Head of caudate nucleus (tissue), 42 donors: ENCODE measurements at regions of chr4 and their contacts with region 1.

Region 1: DNA sequence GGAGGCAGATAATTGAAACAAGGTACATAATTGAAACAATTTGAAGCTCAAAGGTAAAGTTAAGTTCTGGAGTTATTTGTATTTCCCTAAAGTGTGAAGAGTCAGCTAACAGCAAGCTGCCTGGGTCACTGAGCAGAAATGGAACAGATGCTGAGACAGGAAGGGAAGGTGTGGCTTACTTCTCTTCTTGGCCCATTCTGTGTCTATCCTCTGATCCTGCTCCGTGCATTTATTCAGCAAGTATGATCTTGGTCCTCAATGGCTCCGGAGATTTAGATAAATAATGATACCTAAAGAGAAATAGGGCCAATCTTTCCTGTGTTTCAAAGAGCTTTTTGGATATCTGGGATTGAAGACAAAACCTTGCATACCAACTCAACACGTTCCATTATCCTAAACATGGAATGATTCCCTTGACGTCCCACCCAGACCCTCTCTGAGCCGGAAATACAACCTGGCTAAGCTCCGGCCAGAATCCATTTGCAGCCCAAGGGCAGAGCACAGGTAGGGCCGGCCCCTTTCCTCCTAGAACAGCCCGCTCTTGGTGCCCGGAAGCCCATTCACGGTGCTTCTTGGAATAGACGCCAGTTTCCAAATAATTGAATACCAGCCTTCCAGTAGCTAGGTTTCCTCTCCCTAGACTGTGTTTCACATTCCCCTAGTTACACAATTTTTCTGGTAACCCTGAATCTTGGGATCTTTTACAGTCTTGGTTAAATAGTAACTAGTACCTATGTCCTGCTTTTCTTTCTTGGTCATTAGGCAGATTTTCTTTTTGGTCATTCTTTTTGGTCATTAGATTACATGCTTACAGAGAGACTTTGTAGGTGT is 211.0 kb downstream of the NWD2 start:
- DNase-seq: no peak

Region 2: DNA sequence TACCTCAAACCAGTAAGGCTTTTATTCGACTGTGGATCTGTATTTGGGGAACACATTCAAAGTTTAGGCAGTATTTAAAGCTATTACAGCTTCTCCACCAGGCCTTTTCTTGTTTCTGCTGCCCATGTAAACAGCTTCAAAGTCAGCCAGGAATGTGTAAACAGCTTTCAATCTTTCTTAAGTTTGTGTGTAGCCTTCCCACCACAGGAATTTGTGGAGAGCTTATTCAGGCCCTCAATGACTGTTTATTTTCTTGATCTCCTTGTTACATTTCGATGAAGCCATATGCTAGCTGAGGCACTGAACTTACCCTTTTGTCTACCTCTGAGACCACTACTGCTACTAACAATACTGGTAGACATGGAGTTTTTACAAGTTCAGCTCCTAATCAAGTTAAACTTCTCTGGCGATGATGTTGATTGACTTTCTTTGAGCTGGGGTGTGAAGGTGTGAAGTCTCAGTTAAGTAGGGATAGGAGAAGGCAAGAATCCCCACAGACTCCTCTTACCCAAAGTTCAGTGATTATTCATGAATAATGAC is 138.3 kb before region 1 on chr4:
- intact Hi-C with region 1: no loop called
- DNase-seq: no peak

Region 3: DNA sequence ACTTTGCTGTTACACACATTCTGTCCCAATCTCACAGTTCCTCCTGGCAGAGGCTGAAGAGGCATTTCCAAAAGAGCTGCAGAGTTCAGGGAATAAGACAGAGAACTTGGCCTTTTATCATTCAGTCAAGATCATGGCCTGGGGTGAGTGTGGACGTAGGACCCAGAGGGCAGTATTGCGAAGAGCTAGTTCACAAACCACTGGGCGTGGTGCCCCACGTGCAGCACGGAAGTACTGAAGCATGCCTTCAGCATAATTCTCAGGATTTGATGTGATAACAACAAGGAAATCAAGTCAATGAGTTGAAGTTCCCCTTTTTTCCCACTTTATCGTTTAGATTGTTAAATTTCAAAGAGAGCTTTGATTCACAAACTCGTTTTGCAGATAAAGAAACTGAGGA is 113.0 kb after region 1 on chr4:
- intact Hi-C with region 1: loop called (anchors 5 kb)
- DNase-seq: no peak